Astrocyte of the cerebellum (primary cell): ENCODE measurements at regions of chr2 and their contacts with region 1.

Region 1: DNA sequence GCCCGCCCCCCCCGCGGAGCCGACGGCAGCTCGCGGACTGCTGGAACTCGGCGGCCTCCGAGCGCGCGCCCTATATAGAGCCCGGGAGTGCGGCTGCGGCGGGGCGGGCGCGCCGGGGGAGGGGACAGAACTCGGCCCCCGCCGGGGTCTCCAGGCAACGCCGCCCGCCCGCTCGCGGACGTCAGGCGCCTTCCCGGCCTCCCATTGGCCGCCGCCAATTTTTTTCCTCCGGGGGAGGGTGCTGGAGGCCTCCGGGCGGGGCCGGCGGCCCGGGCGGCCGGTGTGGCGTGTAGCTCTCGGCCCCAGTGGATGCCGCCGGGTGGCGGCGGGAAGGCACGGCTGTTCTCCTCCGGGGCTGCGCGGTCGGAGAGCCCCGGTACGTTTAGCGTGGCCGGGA is at the start of gene ZFP36L2:
- DNase-seq: peak; percentile 83
- H3K4me3 ChIP-seq: peak within 1 kb of the TSS; percentile 92
- CTCF ChIP-seq: peak; percentile 4

Region 2: DNA sequence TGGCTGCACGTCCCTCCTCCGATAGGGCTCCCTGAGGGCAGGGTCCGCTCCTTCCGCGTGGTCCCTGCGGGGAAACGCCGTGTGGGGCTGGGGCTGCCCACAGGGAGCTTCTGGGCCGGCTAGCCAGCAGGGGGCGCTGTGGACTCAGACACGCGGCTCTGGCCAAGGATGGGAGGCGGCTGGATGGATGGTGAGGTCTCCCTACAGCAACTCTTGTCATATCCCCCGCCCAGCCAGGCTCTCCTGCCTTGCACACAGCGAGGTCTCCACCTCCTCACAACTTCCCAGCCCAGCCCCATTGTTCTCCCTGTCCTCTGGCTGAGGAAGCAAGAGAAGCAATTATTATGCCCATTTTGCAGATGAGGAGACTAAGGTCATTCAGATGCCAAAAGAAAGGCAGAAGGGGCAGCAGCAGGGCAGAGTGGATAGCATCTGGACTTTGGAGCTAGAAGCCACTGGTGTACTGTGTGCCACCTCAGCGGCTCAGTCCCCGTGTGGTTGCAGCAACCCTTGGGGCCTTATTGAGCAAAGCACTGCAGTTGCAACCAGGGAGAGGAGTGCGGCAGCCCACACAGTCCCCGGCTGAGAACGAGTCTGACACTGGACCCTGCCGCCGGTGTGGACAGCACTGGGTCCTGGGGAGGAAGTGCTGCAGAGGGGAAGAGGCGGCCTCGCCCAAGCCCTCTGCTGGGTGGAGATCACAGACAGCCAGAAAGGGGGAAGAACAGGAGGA is 99.2 kb before region 1 on chr2:
- in situ Hi-C with region 1: no loop called
- DNase-seq: no peak
- H3K4me3 ChIP-seq: no peak overlapping the region
- CTCF ChIP-seq: peak; percentile 50

Region 3: GRCh38 chr2:43542285-43542937 is 315.9 kb after region 1 on chr2:
- in situ Hi-C with region 1: loop called (anchors 10 kb)
- DNase-seq: peak; percentile 50
- H3K4me3 ChIP-seq: no peak overlapping the region
- CTCF ChIP-seq: no peak